ENCODE measurements at regions of chr1 and their contacts with region 1.

Region 1: DNA sequence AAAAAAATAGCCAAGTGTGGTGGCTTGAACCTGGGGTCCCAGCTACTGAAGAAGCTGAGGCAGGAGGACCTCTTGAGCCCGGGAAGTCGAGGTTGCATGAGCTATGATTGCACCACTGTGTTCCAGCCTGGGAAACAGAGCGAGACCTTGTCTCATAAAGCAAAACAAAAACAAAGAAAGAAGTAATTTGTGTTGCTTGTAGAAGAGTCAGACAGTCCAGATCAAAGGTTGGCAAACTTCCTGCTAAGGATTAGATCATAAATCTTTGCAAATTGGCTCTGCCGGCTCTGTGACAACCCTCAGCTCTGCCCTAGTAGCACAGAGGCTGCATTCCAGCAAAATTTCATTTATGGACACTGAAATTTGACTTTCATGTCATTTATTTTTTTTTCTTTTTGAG is 19.0 kb upstream of the MFN2 start:
- DNase-seq: peak; percentile 42
- ATAC-seq: peak; percentile 24; the same call in 1 of the 3 replicates
- H3K4me3 ChIP-seq: no peak overlapping the region
- H3K27ac ChIP-seq: peak overlapping the region; percentile 44
- H3K4me1 ChIP-seq: peaks cover 20% of the 10 kb centered on the region
- H3K27me3 ChIP-seq: no peaks in the 10 kb centered on the region
- CTCF ChIP-seq: no peak
- EP300 ChIP-seq: no peak
- POLR2A ChIP-seq: no peak
- RAD21 ChIP-seq: no peak

Region 2: GRCh38 chr1:11913291-11913690 is 47.9 kb before region 1 on chr1:
- CTCF ChIA-PET with region 1: no interaction called
- POLR2A ChIA-PET with region 1: interaction called, 81 read pairs
- in situ Hi-C with region 1: loop called (anchors 5 kb)
- intact Hi-C with region 1: no loop called
- DNase-seq: peak; percentile 38
- ATAC-seq: no peak
- H3K4me3 ChIP-seq: 0 out of 6 replicates have a peak overlapping the region, but pooled peaks of 1 of the 3 experiments have one; percentile 22
- H3K27ac ChIP-seq: no peak overlapping the region
- H3K4me1 ChIP-seq: peaks cover 64% of the 10 kb centered on the region
- H3K27me3 ChIP-seq: no peaks in the 10 kb centered on the region
- CTCF ChIP-seq: no peak
- EP300 ChIP-seq: no peak
- POLR2A ChIP-seq: no peak
- RAD21 ChIP-seq: no peak

Region 3: GRCh38 chr1:11925938-11926292 is 35.3 kb before region 1 on chr1:
- CTCF ChIA-PET with region 1: no interaction called
- POLR2A ChIA-PET with region 1: no interaction called
- in situ Hi-C with region 1: no loop called
- intact Hi-C with region 1: no loop called
- DNase-seq: no peak
- ATAC-seq: no peak
- H3K4me3 ChIP-seq: peak overlapping the region; percentile 60 to 79 (median 66); a peak in 4 of 6 replicates
- H3K27ac ChIP-seq: peak overlapping the region; percentile 75
- H3K4me1 ChIP-seq: peaks cover 77% of the 10 kb centered on the region
- H3K27me3 ChIP-seq: no peaks in the 10 kb centered on the region; a peak in 1 of 5 replicates
- CTCF ChIP-seq: no peak
- EP300 ChIP-seq: no peak
- POLR2A ChIP-seq: no peak
- RAD21 ChIP-seq: peak; percentile 34; the same call in 1 of the 2 replicates

Region 4: GRCh38 chr1:12113433-12114339 is 152.5 kb after region 1 on chr1:
- CTCF ChIA-PET with region 1: no interaction called
- POLR2A ChIA-PET with region 1: no interaction called
- in situ Hi-C with region 1: no loop called
- intact Hi-C with region 1: no loop called
- DNase-seq: no peak
- ATAC-seq: no peak
- H3K4me3 ChIP-seq: no peak overlapping the region
- H3K27ac ChIP-seq: no peak overlapping the region
- H3K4me1 ChIP-seq: no peaks in the 10 kb centered on the region
- H3K27me3 ChIP-seq: peaks cover 2 to 32% of the 10 kb centered on the region in 2 experiments; a peak in 4 of 5 replicates
- CTCF ChIP-seq: no peak
- EP300 ChIP-seq: no peak
- POLR2A ChIP-seq: no peak
- RAD21 ChIP-seq: no peak

Measured in HepG2 (cell line).